Naive thymus-derived CD4-positive, alpha-beta T cell (primary cell): ENCODE measurements at regions of chr17 and their contacts with region 1.

Region 1: GRCh38 chr17:59311130-59311920 is 20.1 kb upstream of the YPEL2 start:
- DNase-seq: peak in 8 of 9 donors; percentile 38 to 74 (median 63)
- ATAC-seq: peak; percentile 98
- H3K4me3 ChIP-seq: no peak overlapping the region
- H3K4me3 Mint-ChIP-seq: no peak overlapping the region
- H3K27ac ChIP-seq: no peak overlapping the region
- H3K27ac Mint-ChIP-seq: peak overlapping the region in 2 of 9 donors; percentile 29 to 76
- H3K4me1 ChIP-seq: no peaks in the 10 kb centered on the region
- H3K4me1 Mint-ChIP-seq: peaks cover 0 to 7% (median 4%) of the 10 kb centered on the region in 7 donors
- H3K27me3 ChIP-seq: no peaks in the 10 kb centered on the region
- H3K27me3 Mint-ChIP-seq: no peaks in the 10 kb centered on the region

Region 2: GRCh38 chr17:59220376-59221158 is 90.8 kb before region 1 on chr17 and contains the start of gene GDPD1:
- CTCF ChIA-PET with region 1: interaction called, 3 read pairs
- POLR2A ChIA-PET with region 1: no interaction called
- intact Hi-C with region 1: loop called (anchors 1 to 10 kb)
- DNase-seq: peak; percentile 95 to 98 (median 97)
- ATAC-seq: peak; percentile 100
- H3K4me3 ChIP-seq: peak within 1 kb of the TSS; percentile 99
- H3K4me3 Mint-ChIP-seq: peak within 1 kb of the TSS; percentile 94 to 100 (median 98)
- H3K27ac ChIP-seq: peak within 1 kb of the TSS; percentile 92
- H3K27ac Mint-ChIP-seq: peak within 1 kb of the TSS; percentile 94 to 100 (median 98)
- H3K4me1 ChIP-seq: peaks cover 5 to 9% of the 10 kb centered on the region in 2 donors
- H3K4me1 Mint-ChIP-seq: peaks cover 5 to 16% (median 14%) of the 10 kb centered on the region in 7 donors
- H3K27me3 ChIP-seq: no peaks in the 10 kb centered on the region
- H3K27me3 Mint-ChIP-seq: peaks cover 0 to 5% (median 0%) of the 10 kb centered on the region in 5 donors
- total RNA-seq, gene GDPD1: 2.4 to 6.0 (median 3.8) TPM

Region 3: GRCh38 chr17:59347975-59348391 is 36.7 kb after region 1 on chr17:
- CTCF ChIA-PET with region 1: no interaction called
- POLR2A ChIA-PET with region 1: no interaction called
- intact Hi-C with region 1: no loop called
- DNase-seq: no peak
- ATAC-seq: no peak
- H3K4me3 ChIP-seq: no peak overlapping the region
- H3K4me3 Mint-ChIP-seq: no peak overlapping the region
- H3K27ac ChIP-seq: no peak overlapping the region
- H3K27ac Mint-ChIP-seq: peak overlapping the region in 1 of 9 donors; percentile 51
- H3K4me1 ChIP-seq: peaks cover 5 to 16% of the 10 kb centered on the region in 2 donors
- H3K4me1 Mint-ChIP-seq: peaks cover 27 to 87% (median 85%) of the 10 kb centered on the region in 7 donors
- H3K27me3 ChIP-seq: no peaks in the 10 kb centered on the region
- H3K27me3 Mint-ChIP-seq: no peaks in the 10 kb centered on the region

Region 4: DNA sequence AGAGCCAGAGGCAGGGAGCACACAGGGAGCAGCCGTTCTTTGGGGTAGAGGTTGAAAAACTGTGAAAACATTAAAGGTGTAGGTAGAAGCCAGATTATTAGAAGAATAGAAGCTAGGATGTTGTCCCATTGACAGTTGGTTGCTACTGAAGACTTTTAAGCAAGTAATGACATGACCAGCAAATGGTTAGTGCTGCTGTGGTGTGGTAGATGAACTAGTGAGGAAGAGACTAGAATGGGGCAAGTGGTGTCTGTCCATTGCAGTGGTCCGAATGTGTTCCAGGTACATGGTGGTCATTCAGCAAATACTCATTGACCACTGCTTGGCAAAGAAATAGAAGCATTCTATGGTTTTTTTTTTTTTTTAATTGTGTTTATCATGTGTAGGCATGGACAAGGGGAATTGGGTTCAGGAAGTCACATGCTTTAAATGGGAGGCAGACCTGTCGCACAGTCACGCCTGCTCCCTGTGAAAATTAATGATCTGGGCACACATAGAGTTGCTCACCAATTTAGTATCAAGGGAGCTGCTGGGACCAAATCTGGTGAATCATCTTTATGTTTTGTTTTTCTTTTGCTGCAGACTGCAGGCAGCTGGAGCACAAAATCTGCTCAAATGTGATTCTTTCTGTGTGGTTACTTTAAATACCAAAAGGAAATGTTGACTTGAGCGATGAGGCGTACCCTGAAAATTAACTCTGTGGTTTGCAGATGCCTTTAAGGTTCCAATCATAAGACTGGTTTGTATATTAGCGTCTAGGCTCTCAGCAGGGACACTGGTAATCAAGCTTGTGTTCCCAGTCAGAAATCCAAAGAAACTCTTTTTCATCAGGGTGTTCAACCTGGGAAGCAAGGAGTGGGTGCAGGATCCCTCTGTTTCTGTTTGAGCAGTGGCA is 50.8 kb after region 1 on chr17:
- CTCF ChIA-PET with region 1: interaction called, 6 read pairs
- POLR2A ChIA-PET with region 1: interaction called, 5 read pairs
- intact Hi-C with region 1: loop called in 1 of 2 experiments (anchors 1 kb)
- DNase-seq: peak in 8 of 9 donors; percentile 44 to 74 (median 64)
- ATAC-seq: peak; percentile 74
- H3K4me3 ChIP-seq: peak overlapping the region; percentile 43
- H3K4me3 Mint-ChIP-seq: peak overlapping the region; percentile 75 to 90 (median 80)
- H3K27ac ChIP-seq: peak overlapping the region; percentile 68
- H3K27ac Mint-ChIP-seq: peak overlapping the region; percentile 89 to 98 (median 94)
- H3K4me1 ChIP-seq: peaks cover 28 to 83% of the 10 kb centered on the region in 2 donors
- H3K4me1 Mint-ChIP-seq: peaks cover 57 to 97% (median 89%) of the 10 kb centered on the region in 7 donors
- H3K27me3 ChIP-seq: no peaks in the 10 kb centered on the region
- H3K27me3 Mint-ChIP-seq: no peaks in the 10 kb centered on the region

Region 5: GRCh38 chr17:59427425-59427921 is 116.1 kb after region 1 on chr17:
- CTCF ChIA-PET with region 1: interaction called, 21 read pairs
- POLR2A ChIA-PET with region 1: interaction called, 3 read pairs
- intact Hi-C with region 1: loop called in 1 of 2 experiments (anchors 1 kb)
- DNase-seq: peak in 5 of 9 donors; percentile 15 to 49 (median 21)
- ATAC-seq: no peak
- H3K4me3 ChIP-seq: no peak overlapping the region
- H3K4me3 Mint-ChIP-seq: no peak overlapping the region
- H3K27ac ChIP-seq: no peak overlapping the region
- H3K27ac Mint-ChIP-seq: no peak overlapping the region
- H3K4me1 ChIP-seq: no peaks in the 10 kb centered on the region
- H3K4me1 Mint-ChIP-seq: peaks cover 0 to 21% (median 7%) of the 10 kb centered on the region in 7 donors
- H3K27me3 ChIP-seq: no peaks in the 10 kb centered on the region
- H3K27me3 Mint-ChIP-seq: peaks cover 0 to 5% (median 0%) of the 10 kb centered on the region in 5 donors

Region 6: DNA sequence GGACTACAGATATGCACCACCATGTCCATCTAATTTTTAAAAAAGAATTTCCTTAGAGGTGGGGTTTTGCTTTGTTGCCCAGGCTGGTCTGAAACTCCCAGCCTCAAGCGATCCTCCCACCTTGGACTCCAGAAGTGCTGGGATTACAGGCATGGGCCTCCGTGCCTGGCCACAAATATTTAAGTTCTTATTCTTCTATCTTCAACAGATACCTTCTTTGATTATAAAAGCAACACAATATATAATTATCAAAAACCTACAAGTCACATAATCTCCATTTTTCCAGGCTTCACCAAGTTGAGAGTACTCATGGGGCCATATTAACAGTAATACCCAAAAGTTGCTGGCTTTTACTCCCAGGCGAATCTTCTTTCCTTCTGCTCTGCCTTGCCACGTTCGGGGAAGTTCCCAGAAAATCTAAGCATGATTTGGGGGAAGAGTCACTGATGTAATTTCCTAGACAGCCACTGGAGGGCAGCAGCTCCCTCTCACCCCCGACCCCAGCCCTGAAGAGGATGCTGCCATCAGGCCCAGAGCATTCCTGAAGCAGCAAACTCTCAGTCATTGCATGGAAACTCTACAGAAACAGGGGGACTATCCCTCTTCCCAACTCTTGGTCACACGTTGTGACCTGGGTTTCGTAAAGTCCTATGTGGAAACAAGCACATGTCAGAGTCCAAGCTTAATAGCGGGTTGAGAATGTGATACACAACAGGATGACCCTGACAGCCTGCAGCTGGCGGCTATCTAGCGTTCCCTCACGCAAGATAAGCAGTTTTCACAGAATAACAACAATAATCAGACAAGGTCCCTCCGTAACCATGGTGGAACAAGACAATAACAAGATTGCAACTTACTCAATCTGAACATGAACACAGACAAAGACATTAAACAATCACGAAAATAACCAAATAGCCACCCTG is 210.1 kb after region 1 on chr17:
- CTCF ChIA-PET with region 1: interaction called, 9 read pairs
- POLR2A ChIA-PET with region 1: no interaction called
- intact Hi-C with region 1: loop called (anchors 1 kb)
- DNase-seq: peak; percentile 17 to 69 (median 38)
- ATAC-seq: peak; percentile 85
- H3K4me3 ChIP-seq: no peak overlapping the region
- H3K4me3 Mint-ChIP-seq: no peak overlapping the region
- H3K27ac ChIP-seq: no peak overlapping the region
- H3K27ac Mint-ChIP-seq: no peak overlapping the region
- H3K4me1 ChIP-seq: no peaks in the 10 kb centered on the region
- H3K4me1 Mint-ChIP-seq: peaks cover 0 to 6% (median 5%) of the 10 kb centered on the region in 7 donors
- H3K27me3 ChIP-seq: peaks cover 0 to 3% of the 10 kb centered on the region in 2 donors
- H3K27me3 Mint-ChIP-seq: peaks cover 4 to 22% (median 10%) of the 10 kb centered on the region in 5 donors